Heart left ventricle (tissue), 16 donors: ENCODE measurements at regions of chr1 and their contacts with region 1.

Region 1: DNA sequence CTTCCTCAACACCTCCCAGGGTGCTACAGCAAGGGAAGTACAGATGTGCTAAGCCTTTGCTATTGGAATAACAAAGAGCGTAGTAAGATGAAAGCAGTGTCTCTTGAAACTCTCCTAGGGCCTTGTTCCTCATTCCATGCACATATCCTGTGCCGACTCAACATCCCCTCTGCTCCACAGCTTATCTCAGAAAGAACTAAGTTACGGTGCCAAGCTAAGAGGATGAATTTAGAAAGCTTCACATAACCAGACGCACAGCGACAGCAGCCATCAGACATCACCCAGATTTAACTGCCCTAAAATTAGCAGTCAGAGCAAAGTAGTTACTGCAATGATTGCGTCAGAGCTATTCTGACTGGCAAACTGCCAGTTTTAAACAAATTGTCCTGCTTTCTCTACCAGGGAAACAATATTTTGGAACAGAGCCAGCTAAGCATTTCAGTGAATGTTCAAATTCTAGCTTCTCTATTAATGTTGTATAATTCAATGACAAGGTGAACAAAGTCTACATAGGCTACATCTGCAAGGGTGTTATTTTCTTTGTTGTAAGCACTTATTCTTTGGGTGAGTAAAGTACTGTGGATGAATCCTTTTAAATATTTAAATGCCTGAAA is 9.5 kb downstream of the SIPA1L2 start:
- DNase-seq: peak in 4 of 5 donors; percentile 78 to 81 (median 80)
- ATAC-seq: peak; percentile 90 to 96 (median 94)
- H3K4me3 ChIP-seq: peak overlapping the region in 7 of 12 donors; percentile 2 to 26 (median 11)
- H3K27ac ChIP-seq: peak overlapping the region; percentile 21 to 86 (median 82)
- H3K4me1 ChIP-seq: peaks cover 7 to 90% (median 66%) of the 10 kb centered on the region in 12 donors
- H3K27me3 ChIP-seq: no peaks in the 10 kb centered on the region
- CTCF ChIP-seq: no peak
- POLR2A ChIP-seq: peak in 1 of 2 donors; percentile 26

Region 2: DNA sequence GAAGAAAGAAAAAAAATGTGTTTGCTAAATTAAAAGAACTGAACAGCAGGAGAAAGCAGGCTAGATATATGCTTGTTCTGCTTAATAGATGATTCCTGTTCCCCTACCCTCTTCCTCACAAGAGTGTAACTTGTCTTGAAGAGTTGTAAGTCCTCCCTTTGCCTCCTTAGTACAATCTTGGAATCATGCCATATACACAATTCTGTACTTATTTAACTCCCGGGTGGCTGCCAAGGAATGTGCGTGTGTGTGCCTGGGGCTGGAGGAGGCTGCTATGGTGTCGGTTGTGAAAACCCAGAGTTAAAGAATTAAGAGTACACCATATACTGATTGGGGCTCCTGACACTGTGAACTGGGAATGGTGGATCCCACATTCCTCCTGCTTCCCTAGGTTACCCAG is 184.7 kb before region 1 on chr1:
- intact Hi-C with region 1: loop called in 5 of 10 experiments (anchors 5 to 10 kb)
- DNase-seq: peak in 2 of 5 donors; percentile 54
- ATAC-seq: peak; percentile 15 to 47 (median 27)
- H3K4me3 ChIP-seq: no peak overlapping the region
- H3K27ac ChIP-seq: peak overlapping the region in 5 of 12 donors; percentile 1 to 18 (median 7)
- H3K4me1 ChIP-seq: peaks cover 3 to 46% (median 17%) of the 10 kb centered on the region in 12 donors
- H3K27me3 ChIP-seq: no peaks in the 10 kb centered on the region
- CTCF ChIP-seq: no peak
- POLR2A ChIP-seq: no peak

Region 3: DNA sequence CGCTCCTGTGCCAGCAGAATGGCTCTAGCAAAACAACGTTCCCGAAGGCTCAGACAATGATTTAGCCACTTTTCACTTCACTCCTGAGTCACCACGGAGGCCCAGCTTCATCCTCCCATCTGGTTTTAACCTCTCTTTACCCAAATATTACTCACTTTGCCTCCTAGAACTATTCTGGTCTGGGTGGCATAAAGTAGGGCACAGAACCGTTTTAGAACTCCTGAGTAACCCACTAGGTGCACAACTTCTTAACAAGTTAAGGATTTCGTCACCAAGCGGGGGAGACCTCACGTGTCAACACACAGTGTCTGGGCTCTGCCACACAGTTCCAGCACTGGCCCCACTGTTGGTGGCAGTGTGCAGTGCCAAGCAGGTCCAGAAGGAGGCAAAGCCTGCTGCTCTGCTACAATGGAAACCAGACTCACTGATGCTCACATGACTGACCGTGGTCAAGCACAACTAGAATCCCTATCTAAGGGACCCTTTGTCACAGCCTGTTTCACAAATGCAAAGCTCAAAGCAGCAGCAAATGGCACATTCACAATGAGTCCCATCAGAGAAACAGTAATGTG is 112.2 kb before region 1 on chr1:
- intact Hi-C with region 1: loop called in 7 of 10 experiments (anchors 5 to 10 kb)
- DNase-seq: peak in 1 of 5 donors; percentile 33
- ATAC-seq: peak in 3 of 4 donors; percentile 40 to 67 (median 65)
- H3K4me3 ChIP-seq: no peak overlapping the region
- H3K27ac ChIP-seq: peak overlapping the region in 1 of 12 donors; percentile 46
- H3K4me1 ChIP-seq: peaks cover 0 to 57% (median 30%) of the 10 kb centered on the region in 12 donors
- H3K27me3 ChIP-seq: no peaks in the 10 kb centered on the region
- CTCF ChIP-seq: peak in 6 of 12 donors; percentile 13 to 38 (median 30)
- POLR2A ChIP-seq: no peak

Region 4: GRCh38 chr1:232558954-232559353 is 61.5 kb before region 1 on chr1:
- intact Hi-C with region 1: loop called in 7 of 10 experiments (anchors 5 to 10 kb)
- DNase-seq: no peak
- ATAC-seq: no peak
- H3K4me3 ChIP-seq: no peak overlapping the region
- H3K27ac ChIP-seq: peak overlapping the region in 1 of 12 donors; percentile 5
- H3K4me1 ChIP-seq: peaks cover 6 to 95% (median 57%) of the 10 kb centered on the region in 12 donors
- H3K27me3 ChIP-seq: no peaks in the 10 kb centered on the region
- CTCF ChIP-seq: no peak
- POLR2A ChIP-seq: no peak

Region 5: GRCh38 chr1:232599178-232600041 is 21.1 kb before region 1 on chr1:
- intact Hi-C with region 1: no loop called
- DNase-seq: no peak
- ATAC-seq: peak in 3 of 4 donors; percentile 14 to 27 (median 19)
- H3K4me3 ChIP-seq: no peak overlapping the region
- H3K27ac ChIP-seq: peak overlapping the region in 7 of 12 donors; percentile 10 to 42 (median 27)
- H3K4me1 ChIP-seq: peaks cover 0 to 62% (median 45%) of the 10 kb centered on the region in 12 donors
- H3K27me3 ChIP-seq: no peaks in the 10 kb centered on the region
- CTCF ChIP-seq: no peak
- POLR2A ChIP-seq: no peak